ENCODE measurements at regions of chr5 and their contacts with region 1.

Region 1: DNA sequence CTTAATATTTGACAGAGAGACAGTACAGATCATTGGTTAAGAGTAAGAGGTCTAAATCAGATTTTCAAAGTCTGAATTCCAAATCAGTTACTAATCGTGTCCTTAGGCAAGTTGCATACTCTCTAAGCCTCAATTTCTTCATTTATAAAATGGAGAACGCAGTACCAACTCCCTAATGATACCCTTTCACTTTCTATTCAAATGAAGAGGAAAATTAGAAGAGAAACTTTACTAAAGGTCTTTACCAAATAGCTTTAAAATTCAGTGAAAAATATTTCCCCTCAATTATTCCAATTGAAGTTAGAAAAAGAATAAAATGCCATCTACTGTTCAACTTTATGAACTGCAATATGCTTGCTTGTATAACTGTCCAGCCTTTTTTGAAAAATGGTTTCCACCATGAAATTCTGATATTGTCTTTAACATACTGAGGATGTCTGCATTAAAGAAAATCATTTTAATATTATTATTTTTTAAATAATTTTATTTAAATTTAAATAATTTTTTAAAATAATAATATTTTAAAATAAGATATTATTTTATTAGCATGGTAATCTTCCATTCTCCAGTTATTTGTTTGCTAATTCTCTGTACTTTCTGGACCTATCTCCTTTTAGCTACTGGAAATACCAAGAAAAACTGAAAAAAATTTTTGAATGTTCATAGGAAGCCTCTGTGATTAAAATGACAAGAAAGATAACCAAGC is 36.0 kb downstream of the POC5 start:
- DNase-seq: peak; percentile 50
- H3K4me3 ChIP-seq: no peak overlapping the region
- H3K27ac ChIP-seq: peak overlapping the region; percentile 52
- H3K4me1 ChIP-seq: peaks cover 28% of the 10 kb centered on the region
- H3K27me3 ChIP-seq: no peaks in the 10 kb centered on the region
- CTCF ChIP-seq: peak; percentile 8 to 41
- POLR2A ChIP-seq: no peak

Region 2: DNA sequence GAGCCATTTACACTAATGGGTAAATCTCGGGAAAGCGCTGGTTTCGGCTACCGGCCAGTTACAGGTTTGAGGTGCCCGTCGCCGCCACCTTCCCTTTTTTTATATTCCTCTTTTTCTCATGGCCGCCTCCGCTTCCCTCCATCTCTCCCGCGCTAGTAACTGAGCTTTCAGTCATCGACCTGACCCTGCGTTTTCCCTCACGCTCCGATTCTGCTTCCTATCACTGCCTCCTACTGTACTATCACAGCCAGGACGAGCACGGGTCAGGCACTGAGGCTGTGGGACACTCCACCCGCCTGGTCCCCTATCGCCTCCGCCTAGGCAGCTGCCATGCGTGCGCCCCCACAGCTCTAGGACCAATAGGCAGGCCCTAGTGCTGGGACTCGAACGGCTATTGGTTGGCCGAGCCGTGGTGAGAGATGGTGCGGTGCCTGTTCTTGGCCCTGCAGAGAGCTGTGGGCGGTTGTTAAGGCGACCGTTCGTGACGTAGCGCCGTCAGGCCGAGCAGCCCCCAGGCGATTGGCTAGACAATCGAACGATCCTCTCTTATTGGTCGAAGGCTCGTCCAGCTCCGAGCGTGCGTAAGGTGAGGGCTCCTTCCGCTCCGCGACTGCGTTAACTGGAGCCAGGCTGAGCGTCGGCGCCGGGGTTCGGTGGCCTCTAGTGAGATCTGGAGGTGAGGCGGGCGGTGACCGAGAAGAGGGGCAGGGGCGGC is 344.5 kb before region 1 on chr5 and contains the start of gene HMGCR:
- CTCF ChIA-PET with region 1: interaction called, 14 read pairs
- POLR2A ChIA-PET with region 1: interaction called, 3 read pairs
- dilution Hi-C with region 1: no loop called
- intact Hi-C with region 1: loop called (anchors 5 kb)
- DNase-seq: peak; percentile 99
- H3K4me3 ChIP-seq: peak within 1 kb of the TSS; percentile 69 to 97 (median 82)
- H3K27ac ChIP-seq: peak within 1 kb of the TSS; percentile 60
- H3K4me1 ChIP-seq: peaks cover 26% of the 10 kb centered on the region
- H3K27me3 ChIP-seq: no peaks in the 10 kb centered on the region
- CTCF ChIP-seq: peak in 1 of 2 donors; percentile 16
- POLR2A ChIP-seq: peak; percentile 77
- total RNA-seq, gene HMGCR: 104 and 128 TPM in 2 replicates

Region 3: GRCh38 chr5:75511435-75512384 is 169.6 kb before region 1 on chr5 and contains the starts of genes CERT1 and POLK:
- CTCF ChIA-PET with region 1: interaction called, 27 read pairs
- POLR2A ChIA-PET with region 1: no interaction called
- dilution Hi-C with region 1: no loop called
- intact Hi-C with region 1: loop called (anchors 1 kb)
- DNase-seq: peak; percentile 99
- H3K4me3 ChIP-seq: peak within 1 kb of the TSS; percentile 83 to 96 (median 91)
- H3K27ac ChIP-seq: peak within 1 kb of the TSS; percentile 66
- H3K4me1 ChIP-seq: peaks cover 22% of the 10 kb centered on the region
- H3K27me3 ChIP-seq: no peaks in the 10 kb centered on the region
- CTCF ChIP-seq: no peak
- POLR2A ChIP-seq: peak; percentile 78
- total RNA-seq, gene CERT1: 21.3 and 25.6 TPM in 2 replicates
- total RNA-seq, gene POLK: 22.1 and 27.3 TPM in 2 replicates

Region 4: GRCh38 chr5:75584641-75585040 is 96.6 kb before region 1 on chr5:
- CTCF ChIA-PET with region 1: interaction called, 15 read pairs
- POLR2A ChIA-PET with region 1: interaction called, 4 read pairs
- dilution Hi-C with region 1: no loop called
- intact Hi-C with region 1: loop called (anchors 5 kb)
- DNase-seq: no peak
- H3K4me3 ChIP-seq: no peak overlapping the region
- H3K27ac ChIP-seq: no peak overlapping the region
- H3K4me1 ChIP-seq: peaks cover 4% of the 10 kb centered on the region
- H3K27me3 ChIP-seq: no peaks in the 10 kb centered on the region
- CTCF ChIP-seq: no peak
- POLR2A ChIP-seq: no peak

Region 5: GRCh38 chr5:75640395-75640794 is 40.9 kb before region 1 on chr5:
- CTCF ChIA-PET with region 1: interaction called, 6 read pairs
- POLR2A ChIA-PET with region 1: no interaction called
- dilution Hi-C with region 1: no loop called
- intact Hi-C with region 1: loop called (anchors 5 kb)
- DNase-seq: peak; percentile 83
- H3K4me3 ChIP-seq: peak overlapping the region in 1 of 3 experiments; percentile 38
- H3K27ac ChIP-seq: peak overlapping the region; percentile 98
- H3K4me1 ChIP-seq: peaks cover 18% of the 10 kb centered on the region
- H3K27me3 ChIP-seq: no peaks in the 10 kb centered on the region
- CTCF ChIP-seq: no peak
- POLR2A ChIP-seq: no peak

Region 6: GRCh38 chr5:75668977-75669689 is 12.1 kb before region 1 on chr5:
- CTCF ChIA-PET with region 1: interaction called, 19 read pairs
- POLR2A ChIA-PET with region 1: no interaction called
- dilution Hi-C with region 1: no loop called
- intact Hi-C with region 1: no loop called
- DNase-seq: peak; percentile 95
- H3K4me3 ChIP-seq: peak overlapping the region in 1 of 3 experiments; percentile 38
- H3K27ac ChIP-seq: peak overlapping the region; percentile 71
- H3K4me1 ChIP-seq: peaks cover 23% of the 10 kb centered on the region
- H3K27me3 ChIP-seq: no peaks in the 10 kb centered on the region
- CTCF ChIP-seq: no peak
- POLR2A ChIP-seq: peak; percentile 57

Measured in endothelial cell of umbilical vein (primary cell).